Activated naive CD4-positive, alpha-beta T cell treated with anti-CD3 and anti-CD28 coated beads for 36 hours (primary cell): ENCODE measurements at regions of chr19 and their contacts with region 1.

Region 1: DNA sequence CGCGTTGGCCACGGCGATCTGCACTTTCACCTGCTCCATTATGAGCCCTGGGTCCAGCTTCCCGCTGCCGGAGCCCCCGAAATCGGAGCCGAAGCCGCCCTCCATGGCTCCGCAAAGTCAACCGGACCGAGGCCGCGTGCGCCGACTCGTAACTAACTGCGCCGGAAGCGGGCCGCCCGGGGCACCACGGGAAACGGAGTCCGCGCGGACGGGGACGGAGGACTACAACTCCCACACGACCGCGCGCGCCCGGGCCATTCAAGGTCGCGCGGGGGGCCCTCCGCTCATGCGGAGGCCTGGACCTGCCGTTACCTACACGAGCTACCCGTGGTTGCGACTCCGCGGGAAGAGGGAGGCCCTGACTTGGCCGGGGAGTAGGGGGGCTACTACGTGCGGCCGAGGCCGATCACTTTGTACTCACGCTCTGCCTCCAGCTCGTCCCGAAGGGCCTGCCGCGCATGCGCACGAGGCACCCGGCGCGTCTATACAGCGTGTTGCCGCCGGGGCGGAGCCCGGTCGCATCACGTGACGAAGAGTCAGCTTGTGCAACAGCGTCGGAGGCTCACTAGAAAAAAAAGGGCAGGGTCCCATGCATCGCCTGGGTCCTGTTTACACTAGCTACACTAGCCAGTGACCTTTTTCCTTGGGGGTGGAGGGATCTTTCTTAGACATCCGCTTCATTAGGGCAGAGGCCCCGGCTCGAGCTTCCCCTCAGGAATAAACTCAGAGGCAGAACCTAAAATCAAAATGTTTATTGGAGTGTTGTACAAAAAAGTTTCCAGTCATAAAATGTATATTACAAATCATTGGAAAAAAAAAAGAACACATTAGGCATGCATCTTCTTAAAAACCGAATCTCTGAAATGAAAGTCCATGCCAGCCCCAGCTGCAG is at the start of gene TIMM13:
- DNase-seq: peak; percentile 96
- H3K4me3 Mint-ChIP-seq: peak within 1 kb of the TSS; percentile 93
- H3K27ac Mint-ChIP-seq: peak within 1 kb of the TSS; percentile 96
- H3K4me1 Mint-ChIP-seq: peaks cover 13% of the 10 kb centered on the region
- H3K27me3 Mint-ChIP-seq: no peaks in the 10 kb centered on the region
- total RNA-seq, gene TIMM13: 67.3 to 70.8 TPM

Region 2: DNA sequence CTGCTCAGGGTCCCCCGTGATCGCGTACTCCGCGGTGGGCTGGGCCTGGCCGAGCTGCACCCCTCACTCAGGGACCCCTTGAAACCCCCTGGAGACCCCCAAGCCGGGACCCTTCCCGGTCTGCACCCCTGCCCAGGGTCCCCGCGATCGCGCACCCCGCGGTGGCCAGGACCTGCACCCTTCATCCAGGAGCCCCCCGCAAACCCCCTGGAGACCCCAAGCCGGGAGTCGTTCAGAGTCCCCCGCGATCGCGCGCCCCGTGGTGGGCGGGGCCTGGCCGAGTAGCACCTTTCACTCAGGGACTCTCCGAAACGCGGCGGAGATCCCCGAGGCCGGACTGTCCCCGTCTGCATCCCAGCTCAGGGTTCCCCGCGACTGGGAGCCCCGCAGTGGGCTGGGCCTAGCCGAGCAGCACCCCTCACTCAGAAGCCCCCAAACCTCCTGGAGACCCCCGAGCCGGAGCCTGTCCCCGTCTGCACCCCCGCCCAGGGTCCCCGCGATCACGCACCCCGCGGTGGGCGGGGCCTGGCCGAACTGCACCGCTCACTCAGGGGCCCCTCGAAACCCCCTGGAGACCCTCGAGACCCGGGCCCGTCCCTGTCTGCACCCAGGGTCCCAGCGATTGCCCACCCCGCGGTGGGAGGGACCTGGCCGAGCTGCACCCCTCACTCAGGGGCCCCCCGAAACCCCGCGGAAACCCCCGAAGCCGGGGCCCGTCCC is 28.3 kb after region 1 on chr19:
- CTCF ChIA-PET with region 1: no interaction called
- intact Hi-C with region 1: loop called (anchors 1 kb)
- DNase-seq: peak; percentile 71
- H3K4me3 Mint-ChIP-seq: peak overlapping the region; percentile 86
- H3K27ac Mint-ChIP-seq: peak overlapping the region; percentile 87
- H3K4me1 Mint-ChIP-seq: peaks cover 27% of the 10 kb centered on the region
- H3K27me3 Mint-ChIP-seq: no peaks in the 10 kb centered on the region

Region 3: GRCh38 chr19:2475702-2476450 is 48.2 kb after region 1 on chr19 and contains the start of gene GADD45B:
- CTCF ChIA-PET with region 1: no interaction called
- intact Hi-C with region 1: no loop called
- DNase-seq: peak; percentile 98
- H3K4me3 Mint-ChIP-seq: peak within 1 kb of the TSS; percentile 99
- H3K27ac Mint-ChIP-seq: peak within 1 kb of the TSS; percentile 97
- H3K4me1 Mint-ChIP-seq: peaks cover 22% of the 10 kb centered on the region
- H3K27me3 Mint-ChIP-seq: no peaks in the 10 kb centered on the region
- total RNA-seq, gene GADD45B: 107 to 112 TPM